ENCODE measurements at regions of chr3 and their contacts with region 1.

Region 1: DNA sequence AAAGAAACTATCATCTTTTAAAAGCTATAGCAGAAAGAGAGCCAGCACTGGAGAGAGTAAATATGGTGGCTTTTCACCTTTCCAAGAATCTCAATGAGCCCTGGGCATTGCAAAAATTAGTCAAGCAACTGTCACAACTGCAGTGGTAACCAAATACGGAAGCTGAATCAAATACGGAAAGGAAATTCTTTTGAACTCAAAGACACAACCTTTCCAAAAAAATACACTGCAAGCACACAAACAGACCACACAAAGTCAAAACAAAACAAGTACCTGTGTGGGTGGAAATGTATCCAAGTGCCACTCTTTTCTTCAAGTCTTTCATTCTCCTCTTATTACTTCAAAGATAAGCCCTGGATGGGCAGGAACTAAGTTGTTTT is 17.6 kb downstream of the VGLL4 start:
- DNase-seq: peak; percentile 42
- H3K4me3 Mint-ChIP-seq: peak overlapping the region; percentile 39
- H3K27ac Mint-ChIP-seq: peak overlapping the region; percentile 71
- H3K4me1 Mint-ChIP-seq: peaks cover 69% of the 10 kb centered on the region
- H3K27me3 Mint-ChIP-seq: no peaks in the 10 kb centered on the region

Region 2: DNA sequence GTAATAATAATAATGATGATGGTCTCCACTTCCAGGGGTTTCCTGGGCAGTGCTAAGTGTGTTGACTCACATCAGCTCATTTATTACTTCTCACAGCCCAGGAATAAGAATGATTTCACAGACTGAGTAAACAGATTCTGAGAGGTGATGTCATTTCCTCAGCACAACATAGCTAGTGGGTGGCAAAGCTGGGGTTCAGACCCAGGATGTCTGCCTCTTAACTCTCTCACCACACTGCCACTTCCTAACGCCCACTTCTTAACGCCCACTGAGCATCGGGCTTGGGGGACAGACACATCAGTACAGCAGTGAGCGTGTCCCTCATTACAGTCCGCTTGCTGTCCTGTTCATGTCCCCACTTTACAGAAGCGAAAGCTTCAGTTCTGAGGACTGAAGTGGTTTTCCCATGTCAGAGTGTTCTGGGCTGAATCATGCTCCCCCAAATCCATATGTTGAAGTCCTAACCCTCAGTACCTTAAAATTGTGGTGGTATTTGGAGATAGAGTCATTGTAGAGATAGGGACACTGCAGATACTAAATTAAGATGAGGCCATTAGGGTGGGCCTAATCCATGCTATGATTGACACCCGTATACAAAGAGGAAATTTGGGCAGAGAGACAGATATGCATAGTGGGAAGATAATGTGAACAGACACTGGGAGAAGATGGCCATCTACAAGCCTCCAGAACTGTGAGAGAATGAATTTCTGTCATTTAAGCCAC is 1188.6 kb before region 1 on chr3:
- intact Hi-C with region 1: loop called (anchors 5 kb)
- DNase-seq: peak; percentile 58
- H3K4me3 Mint-ChIP-seq: peak overlapping the region; percentile 32
- H3K27ac Mint-ChIP-seq: peak overlapping the region; percentile 82
- H3K4me1 Mint-ChIP-seq: peaks cover 29% of the 10 kb centered on the region
- H3K27me3 Mint-ChIP-seq: no peaks in the 10 kb centered on the region

Region 3: GRCh38 chr3:10977892-10978510 is 648.1 kb before region 1 on chr3:
- intact Hi-C with region 1: no loop called
- DNase-seq: no peak
- H3K4me3 Mint-ChIP-seq: no peak overlapping the region
- H3K27ac Mint-ChIP-seq: no peak overlapping the region
- H3K4me1 Mint-ChIP-seq: no peaks in the 10 kb centered on the region
- H3K27me3 Mint-ChIP-seq: peaks cover 3% of the 10 kb centered on the region

Region 4: DNA sequence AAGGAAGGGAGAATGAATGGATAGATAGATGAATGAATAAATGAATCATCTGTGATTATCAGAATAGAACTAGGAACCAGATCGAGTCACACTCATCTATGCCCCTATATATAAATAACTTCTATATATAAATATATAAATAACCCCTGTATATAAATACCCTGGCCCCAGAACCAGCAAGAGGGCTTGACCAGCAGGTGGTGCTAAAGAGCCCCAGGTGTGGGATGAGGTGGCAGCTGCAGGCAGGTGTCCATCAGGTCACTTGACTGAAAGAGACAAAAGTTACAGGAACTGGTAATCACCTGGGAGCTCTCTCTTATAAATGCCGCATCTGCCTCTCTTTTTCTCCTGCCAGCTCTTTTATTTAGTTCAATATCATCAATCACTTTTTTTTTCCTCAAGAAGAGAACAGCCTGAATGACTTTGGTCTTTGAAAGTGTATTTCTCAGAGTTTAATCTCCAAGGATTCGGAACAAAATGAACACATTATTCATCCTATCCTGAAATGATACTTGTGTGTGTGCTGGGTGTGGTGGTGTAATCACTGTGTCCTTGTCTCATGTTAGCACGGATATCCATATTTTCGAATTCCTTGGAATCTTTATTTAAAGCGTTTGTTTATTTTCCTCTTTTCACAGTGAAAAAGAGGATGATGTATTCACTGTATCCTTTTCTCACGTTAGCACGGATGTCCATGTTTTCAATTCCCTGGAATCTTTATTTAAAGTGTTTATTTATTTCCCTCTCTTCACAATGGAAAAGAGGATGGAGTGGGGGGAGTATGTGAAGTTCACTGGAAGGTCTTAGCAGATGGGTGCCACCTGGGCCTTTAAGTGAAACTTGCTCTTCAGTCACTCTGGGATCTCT is 389.2 kb before region 1 on chr3:
- intact Hi-C with region 1: loop called (anchors 1 kb)
- DNase-seq: peak; percentile 62
- H3K4me3 Mint-ChIP-seq: no peak overlapping the region
- H3K27ac Mint-ChIP-seq: no peak overlapping the region
- H3K4me1 Mint-ChIP-seq: peaks cover 27% of the 10 kb centered on the region
- H3K27me3 Mint-ChIP-seq: peaks cover 22% of the 10 kb centered on the region

Region 5: GRCh38 chr3:11770477-11771391 is 144.7 kb after region 1 on chr3:
- intact Hi-C with region 1: loop called (anchors 5 kb)
- DNase-seq: peak; percentile 82
- H3K4me3 Mint-ChIP-seq: peak overlapping the region; percentile 21
- H3K27ac Mint-ChIP-seq: peak overlapping the region; percentile 82
- H3K4me1 Mint-ChIP-seq: peaks cover 20% of the 10 kb centered on the region
- H3K27me3 Mint-ChIP-seq: no peaks in the 10 kb centered on the region